ENCODE measurements at regions of chr11 and their contacts with region 1.

Region 1: GRCh38 chr11:75896843-75897419 is 81.9 kb downstream of the UVRAG start:
- DNase-seq: no peak
- H3K4me3 ChIP-seq: no peak overlapping the region
- H3K27ac ChIP-seq: no peak overlapping the region
- H3K4me1 ChIP-seq: peaks cover 9 to 65% (median 20%) of the 10 kb centered on the region in 6 donors
- H3K27me3 ChIP-seq: no peaks in the 10 kb centered on the region
- CTCF ChIP-seq: peak; percentile 44 to 83 (median 74)
- POLR2A ChIP-seq: no peak

Region 2: GRCh38 chr11:76329084-76329984 is 432.4 kb after region 1 on chr11:
- intact Hi-C with region 1: loop called (anchors 10 kb)
- DNase-seq: no peak
- H3K4me3 ChIP-seq: no peak overlapping the region
- H3K27ac ChIP-seq: no peak overlapping the region
- H3K4me1 ChIP-seq: peaks cover 0 to 10% (median 0%) of the 10 kb centered on the region in 6 donors
- H3K27me3 ChIP-seq: no peaks in the 10 kb centered on the region
- CTCF ChIP-seq: no peak
- POLR2A ChIP-seq: no peak

Measured in spleen (tissue), 13 donors.